B cell (primary cell): ENCODE measurements at regions of chr1 and their contacts with region 1.

Region 1: GRCh38 chr1:155250633-155251449 is 4.4 kb downstream of the ENTREP3 start:
- DNase-seq: peak; percentile 95
- ATAC-seq: peak; percentile 96
- H3K4me3 ChIP-seq: peak overlapping the region in 4 of 5 experiments; percentile 47 to 69 (median 60)
- H3K4me3 Mint-ChIP-seq: peak overlapping the region; percentile 79
- H3K27ac ChIP-seq: peak overlapping the region; percentile 8 to 52
- H3K27ac Mint-ChIP-seq: peak overlapping the region; percentile 47
- H3K4me1 ChIP-seq: peaks cover 19 to 30% of the 10 kb centered on the region in 2 donors
- H3K4me1 Mint-ChIP-seq: peaks cover 32% of the 10 kb centered on the region
- H3K27me3 ChIP-seq: no peaks in the 10 kb centered on the region
- H3K27me3 Mint-ChIP-seq: no peaks in the 10 kb centered on the region
- CTCF ChIP-seq: peak; percentile 100

Region 2: DNA sequence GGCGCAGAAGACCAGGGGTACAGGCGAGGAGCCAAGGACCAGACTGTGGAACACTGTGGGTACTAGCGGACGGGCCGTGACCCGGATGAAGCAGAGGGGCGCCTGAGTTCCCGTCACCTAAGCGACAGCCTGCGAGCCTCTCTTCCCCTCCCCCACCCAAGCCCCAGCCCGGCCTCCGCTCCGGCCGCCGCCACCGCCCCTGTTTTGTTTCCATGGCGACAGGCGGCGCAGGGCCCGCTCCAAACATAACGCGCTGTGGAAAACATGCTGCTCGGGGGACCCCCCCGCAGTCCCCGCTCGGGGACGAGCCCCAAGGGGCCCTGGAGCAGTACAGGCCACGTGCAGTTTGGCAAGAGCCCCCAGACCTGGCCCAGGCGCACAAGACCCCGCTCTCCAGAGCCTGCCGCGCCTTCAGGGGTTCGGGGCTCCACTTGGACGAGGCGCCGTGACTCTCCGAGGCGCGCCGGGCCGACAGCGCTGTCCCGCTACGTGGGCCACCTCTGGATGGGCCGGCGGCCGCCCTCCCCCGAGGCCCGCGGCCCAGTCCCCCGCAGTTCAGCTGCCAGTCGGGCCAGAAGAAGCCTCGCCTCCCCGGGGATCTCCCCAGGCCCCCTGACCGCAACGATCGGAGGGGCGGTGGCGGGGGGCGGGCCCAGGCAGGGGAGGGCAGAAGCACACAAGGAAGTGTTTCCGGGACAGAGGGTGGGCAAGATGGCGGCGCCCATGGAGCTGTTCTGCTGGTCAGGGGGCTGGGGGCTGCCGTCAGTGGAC is 42.1 kb before region 1 on chr1 and contains the start of gene MTX1:
- CTCF ChIA-PET with region 1: interaction called, 46 read pairs
- POLR2A ChIA-PET with region 1: interaction called, 5 read pairs
- intact Hi-C with region 1: no loop called
- DNase-seq: peak; percentile 95
- ATAC-seq: peak; percentile 79
- H3K4me3 ChIP-seq: peak within 1 kb of the TSS; percentile 67 to 94 (median 84)
- H3K4me3 Mint-ChIP-seq: peak within 1 kb of the TSS; percentile 81
- H3K27ac ChIP-seq: peak within 1 kb of the TSS; percentile 95 to 100
- H3K27ac Mint-ChIP-seq: peak within 1 kb of the TSS; percentile 91
- H3K4me1 ChIP-seq: peaks cover 21 to 26% of the 10 kb centered on the region in 2 donors
- H3K4me1 Mint-ChIP-seq: peaks cover 22% of the 10 kb centered on the region
- H3K27me3 ChIP-seq: no peaks in the 10 kb centered on the region
- H3K27me3 Mint-ChIP-seq: no peaks in the 10 kb centered on the region
- CTCF ChIP-seq: no peak
- total RNA-seq, gene MTX1: 18.4 and 19.0 TPM in 2 replicates

Region 3: DNA sequence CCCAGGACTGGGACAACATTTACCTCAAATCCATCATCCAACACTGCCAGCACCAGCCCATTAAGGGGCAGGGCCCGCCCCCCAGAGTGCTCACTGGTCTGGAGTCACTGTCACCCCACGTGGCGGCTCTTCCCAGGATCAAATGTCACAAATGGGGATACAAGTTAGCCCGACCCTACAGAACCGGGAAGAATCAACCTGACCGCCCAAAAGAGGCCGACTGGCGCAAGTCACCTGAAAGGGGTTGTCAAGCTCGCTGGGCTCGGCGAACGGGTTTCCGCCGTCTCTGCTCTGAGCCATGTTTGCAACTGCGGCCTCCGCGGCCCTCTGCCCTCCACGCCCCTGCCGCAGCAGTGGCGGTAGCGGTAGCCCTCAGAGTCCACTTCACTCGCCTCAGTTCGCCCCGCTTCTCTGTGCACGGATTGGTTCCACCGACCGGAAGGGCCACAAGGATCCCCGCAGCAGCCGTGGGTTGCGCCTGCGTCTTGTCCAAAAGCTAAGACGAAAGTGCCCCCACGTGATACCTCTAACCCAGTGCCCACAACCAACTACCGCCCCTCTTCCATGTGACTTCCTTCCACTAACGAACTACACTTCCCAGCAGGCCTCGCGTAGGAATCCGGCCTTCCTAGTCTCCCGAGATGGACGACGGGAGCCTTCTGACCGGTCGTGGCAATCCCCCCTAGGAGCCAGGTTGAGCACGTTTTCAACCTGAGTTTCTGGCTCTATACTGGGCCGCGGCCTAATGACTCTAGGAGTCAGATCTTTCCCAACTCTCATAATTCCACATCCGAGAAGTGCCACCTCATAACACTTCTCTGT is 11.2 kb after region 1 on chr1 and contains the start of gene SCAMP3:
- CTCF ChIA-PET with region 1: interaction called, 71 read pairs
- POLR2A ChIA-PET with region 1: interaction called, 7 read pairs
- intact Hi-C with region 1: no loop called
- DNase-seq: peak; percentile 93
- ATAC-seq: peak; percentile 95
- H3K4me3 ChIP-seq: peak within 1 kb of the TSS; percentile 62 to 96 (median 86)
- H3K4me3 Mint-ChIP-seq: peak within 1 kb of the TSS; percentile 89
- H3K27ac ChIP-seq: peak within 1 kb of the TSS; percentile 50 to 73
- H3K27ac Mint-ChIP-seq: peak within 1 kb of the TSS; percentile 91
- H3K4me1 ChIP-seq: peaks cover 14 to 25% of the 10 kb centered on the region in 2 donors
- H3K4me1 Mint-ChIP-seq: peaks cover 28% of the 10 kb centered on the region
- H3K27me3 ChIP-seq: no peaks in the 10 kb centered on the region
- H3K27me3 Mint-ChIP-seq: no peaks in the 10 kb centered on the region
- CTCF ChIP-seq: no peak
- total RNA-seq, gene SCAMP3: 69.6 and 79.8 TPM in 2 replicates

Region 4: DNA sequence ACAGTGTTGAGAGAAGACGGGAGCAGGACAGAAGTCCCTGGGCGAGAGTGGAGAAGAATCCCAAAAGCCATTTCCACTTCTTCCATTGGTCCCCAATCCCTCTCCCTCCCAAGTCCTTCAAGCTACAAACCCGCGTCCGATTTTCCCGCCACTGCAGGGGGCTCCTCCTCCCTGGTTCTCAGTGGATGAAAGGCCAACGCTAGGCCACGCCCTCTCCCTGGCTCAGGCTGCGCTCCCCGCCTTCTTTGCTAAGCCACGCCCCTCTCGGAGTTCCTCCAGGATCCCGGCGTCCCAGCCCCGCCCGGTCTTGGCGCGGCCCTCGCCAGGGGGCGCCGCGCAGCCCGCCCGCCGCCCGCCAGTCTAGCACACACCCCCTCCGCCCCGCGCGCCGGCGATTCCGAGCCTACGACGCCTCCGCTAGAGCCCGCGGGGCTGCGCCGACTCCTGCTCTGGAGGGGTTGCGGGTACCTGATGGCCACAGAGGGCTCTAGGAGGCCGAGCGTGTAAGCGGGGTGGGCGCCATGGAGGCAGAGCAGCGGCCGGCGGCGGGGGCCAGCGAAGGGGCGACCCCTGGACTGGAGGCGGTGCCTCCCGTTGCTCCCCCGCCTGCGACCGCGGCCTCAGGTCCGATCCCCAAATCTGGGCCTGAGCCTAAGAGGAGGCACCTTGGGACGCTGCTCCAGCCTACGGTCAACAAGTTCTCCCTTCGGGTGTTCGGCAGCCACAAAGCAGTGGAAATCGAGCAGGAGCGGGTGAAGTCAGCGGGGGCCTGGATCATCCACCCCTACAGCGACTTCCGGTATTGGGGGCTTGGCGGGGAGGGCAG is 26.4 kb after region 1 on chr1 and contains the start of gene HCN3:
- CTCF ChIA-PET with region 1: interaction called, 17 read pairs
- POLR2A ChIA-PET with region 1: interaction called, 5 read pairs
- intact Hi-C with region 1: loop called (anchors 2 kb)
- DNase-seq: peak; percentile 95
- ATAC-seq: peak; percentile 75
- H3K4me3 ChIP-seq: peak within 1 kb of the TSS; percentile 49 to 64 (median 59)
- H3K4me3 Mint-ChIP-seq: peak within 1 kb of the TSS; percentile 83
- H3K27ac ChIP-seq: peak within 1 kb of the TSS in 1 of 2 donors; percentile 33
- H3K27ac Mint-ChIP-seq: peak within 1 kb of the TSS; percentile 41
- H3K4me1 ChIP-seq: peaks cover 25 to 36% of the 10 kb centered on the region in 2 donors
- H3K4me1 Mint-ChIP-seq: peaks cover 35% of the 10 kb centered on the region
- H3K27me3 ChIP-seq: no peaks in the 10 kb centered on the region
- H3K27me3 Mint-ChIP-seq: no peaks in the 10 kb centered on the region
- CTCF ChIP-seq: peak; percentile 76
- total RNA-seq, gene HCN3: 9.0 and 9.2 TPM in 2 replicates

Region 5: GRCh38 chr1:155323798-155324610 is 73.2 kb after region 1 on chr1:
- CTCF ChIA-PET with region 1: interaction called, 128 read pairs
- POLR2A ChIA-PET with region 1: interaction called, 4 read pairs
- intact Hi-C with region 1: loop called (anchors 1 kb)
- DNase-seq: peak; percentile 89
- ATAC-seq: peak; percentile 74
- H3K4me3 ChIP-seq: peak overlapping the region; percentile 64 to 100 (median 97)
- H3K4me3 Mint-ChIP-seq: peak overlapping the region; percentile 92
- H3K27ac ChIP-seq: peak overlapping the region; percentile 81 to 85
- H3K27ac Mint-ChIP-seq: peak overlapping the region; percentile 87
- H3K4me1 ChIP-seq: peaks cover 17 to 35% of the 10 kb centered on the region in 2 donors
- H3K4me1 Mint-ChIP-seq: peaks cover 32% of the 10 kb centered on the region
- H3K27me3 ChIP-seq: no peaks in the 10 kb centered on the region
- H3K27me3 Mint-ChIP-seq: no peaks in the 10 kb centered on the region
- CTCF ChIP-seq: no peak

Region 6: DNA sequence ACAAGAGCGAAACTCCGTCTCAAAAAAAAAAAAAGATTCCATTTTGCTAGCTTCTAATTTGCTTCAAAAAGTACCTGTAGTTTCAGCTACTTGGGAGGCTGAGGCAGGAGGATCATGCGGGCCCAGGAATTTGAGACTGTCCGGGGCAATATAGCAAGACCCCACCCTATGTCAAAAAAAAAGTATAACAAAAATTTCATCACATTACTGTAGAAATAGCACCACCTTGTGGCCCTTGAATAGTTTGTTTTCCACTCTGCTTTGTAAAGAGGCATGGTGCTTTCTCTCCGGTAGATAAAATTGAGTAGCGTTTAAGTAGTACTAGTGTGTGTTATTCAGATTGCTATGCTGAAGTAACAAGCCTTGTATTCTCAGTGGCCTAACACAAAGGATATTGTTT is 340.9 kb after region 1 on chr1:
- CTCF ChIA-PET with region 1: interaction called, 45 read pairs
- POLR2A ChIA-PET with region 1: no interaction called
- intact Hi-C with region 1: loop called (anchors 1 kb)
- DNase-seq: peak; percentile 74
- ATAC-seq: peak; percentile 60
- H3K4me3 ChIP-seq: no peak overlapping the region
- H3K4me3 Mint-ChIP-seq: no peak overlapping the region
- H3K27ac ChIP-seq: no peak overlapping the region
- H3K27ac Mint-ChIP-seq: no peak overlapping the region
- H3K4me1 ChIP-seq: no peaks in the 10 kb centered on the region
- H3K4me1 Mint-ChIP-seq: no peaks in the 10 kb centered on the region
- H3K27me3 ChIP-seq: no peaks in the 10 kb centered on the region
- H3K27me3 Mint-ChIP-seq: no peaks in the 10 kb centered on the region
- CTCF ChIP-seq: peak; percentile 75